Psoas muscle (tissue), 8 donors: ENCODE measurements at regions of chr6 and their contacts with region 1.

Region 1: GRCh38 chr6:44234101-44235025 is 11.0 kb downstream of the SLC29A1 start:
- DNase-seq: peak; percentile 91 to 96
- ATAC-seq: peak; percentile 68 to 74 (median 72)
- H3K4me3 ChIP-seq: peak overlapping the region; percentile 4
- H3K27ac ChIP-seq: peak overlapping the region; percentile 96
- H3K4me1 ChIP-seq: peaks cover 51% of the 10 kb centered on the region
- H3K27me3 ChIP-seq: no peaks in the 10 kb centered on the region
- CTCF ChIP-seq: peak; percentile 84

Region 2: DNA sequence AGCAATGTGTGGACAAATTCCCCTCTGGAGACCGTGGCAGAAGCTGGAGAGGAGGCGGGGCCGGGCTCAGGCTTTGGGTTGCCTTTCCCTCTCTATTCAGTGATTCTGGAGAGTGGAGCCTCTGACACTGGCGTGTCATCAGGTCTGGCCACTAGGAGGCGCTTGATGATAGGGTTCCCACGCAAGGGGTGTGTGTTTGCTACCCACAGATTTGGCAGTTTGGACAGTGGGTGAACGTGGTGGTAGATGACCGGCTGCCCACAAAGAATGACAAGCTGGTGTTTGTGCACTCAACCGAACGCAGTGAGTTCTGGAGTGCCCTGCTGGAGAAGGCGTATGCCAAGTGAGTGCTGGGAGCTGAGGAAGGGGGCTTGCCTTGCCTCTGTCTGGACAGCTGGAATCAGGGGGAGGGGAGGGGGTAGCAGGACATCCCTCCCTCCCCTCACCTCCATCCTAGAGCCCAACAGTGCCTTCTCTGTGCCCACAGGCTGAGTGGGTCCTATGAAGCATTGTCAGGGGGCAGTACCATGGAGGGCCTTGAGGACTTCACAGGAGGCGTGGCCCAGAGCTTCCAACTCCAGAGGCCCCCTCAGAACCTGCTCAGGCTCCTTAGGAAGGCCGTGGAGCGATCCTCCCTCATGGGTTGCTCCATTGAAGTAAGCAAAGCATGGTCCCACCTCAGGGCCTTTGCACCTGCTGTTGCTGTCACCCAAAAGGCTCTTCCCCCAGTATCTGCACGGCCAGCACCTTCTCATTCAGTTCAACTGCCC is 61.4 kb before region 1 on chr6:
- intact Hi-C with region 1: loop called (anchors 1 to 2 kb)
- DNase-seq: peak; percentile 85 to 91
- ATAC-seq: peak; percentile 95 to 98 (median 96)
- H3K4me3 ChIP-seq: no peak overlapping the region
- H3K27ac ChIP-seq: no peak overlapping the region
- H3K4me1 ChIP-seq: peaks cover 8% of the 10 kb centered on the region
- H3K27me3 ChIP-seq: no peaks in the 10 kb centered on the region
- CTCF ChIP-seq: peak; percentile 90